ENCODE measurements at regions of chrX and their contacts with region 1.

Region 1: DNA sequence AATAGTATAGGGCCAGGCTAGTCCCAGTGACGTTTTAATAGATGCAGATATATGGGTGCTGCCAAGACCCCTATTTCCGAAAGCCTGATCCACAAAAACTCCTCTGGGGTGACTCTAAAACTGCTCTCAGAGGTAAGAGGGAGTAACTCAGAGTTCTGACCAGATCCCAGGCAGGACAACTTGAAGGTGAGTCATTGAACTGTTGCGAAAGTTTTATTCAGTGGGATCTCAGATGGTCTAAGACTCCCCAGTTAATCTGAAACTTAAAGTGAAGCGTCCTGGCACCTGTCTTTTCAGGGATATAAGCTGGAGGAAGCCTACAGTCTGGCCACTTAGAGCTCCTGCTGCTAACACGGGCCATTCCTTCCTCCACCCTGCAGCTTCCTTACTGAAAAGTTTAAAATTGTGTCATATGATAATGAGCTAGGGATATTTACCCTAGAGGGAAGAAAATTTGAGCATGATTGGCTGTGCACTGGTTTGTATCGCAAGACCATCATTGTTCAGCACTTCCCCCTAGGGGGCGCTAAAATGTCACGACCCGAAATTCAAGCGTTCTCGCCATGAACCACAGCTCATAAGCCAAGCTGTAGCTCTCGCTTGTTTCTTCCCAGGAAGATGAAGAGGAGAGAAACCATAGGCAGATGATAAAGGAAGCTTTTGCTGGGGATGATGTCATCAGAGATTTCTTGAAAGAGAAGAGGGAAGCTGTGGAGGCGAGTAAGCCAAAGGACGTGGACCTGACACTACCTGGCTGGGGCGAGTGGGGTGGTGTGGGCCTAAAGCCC is 19.5 kb downstream of the UTP14A start:
- DNase-seq: peak; percentile 82
- ATAC-seq: peak; percentile 85

Region 2: DNA sequence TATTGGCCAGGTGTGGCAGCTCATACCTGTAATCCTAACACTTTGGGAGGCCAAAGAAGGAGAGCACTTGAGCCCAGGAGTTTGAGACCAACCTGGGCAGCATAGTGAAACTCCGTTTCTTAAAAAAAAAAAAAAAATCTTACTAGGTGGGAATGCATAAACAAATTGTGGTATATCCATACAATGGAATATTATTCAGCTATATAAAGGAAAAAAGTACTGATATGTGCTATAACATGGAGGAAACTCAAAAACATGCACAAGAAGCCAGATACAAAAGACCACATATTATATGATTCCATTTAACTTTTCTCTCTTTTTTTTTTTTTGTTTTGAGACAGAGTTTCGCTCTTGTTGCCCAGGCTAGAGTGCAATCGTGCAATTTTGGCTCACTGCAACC is 43.5 kb after region 1 on chrX:
- intact Hi-C with region 1: no loop called
- DNase-seq: no peak
- ATAC-seq: no peak

Region 3: GRCh38 chrX:130060122-130061069 is 134.9 kb after region 1 on chrX:
- intact Hi-C with region 1: loop called (anchors 5 kb)
- DNase-seq: peak; percentile 89
- ATAC-seq: peak; percentile 89